ENCODE measurements at regions of chr10 and their contacts with region 1.

Region 1: DNA sequence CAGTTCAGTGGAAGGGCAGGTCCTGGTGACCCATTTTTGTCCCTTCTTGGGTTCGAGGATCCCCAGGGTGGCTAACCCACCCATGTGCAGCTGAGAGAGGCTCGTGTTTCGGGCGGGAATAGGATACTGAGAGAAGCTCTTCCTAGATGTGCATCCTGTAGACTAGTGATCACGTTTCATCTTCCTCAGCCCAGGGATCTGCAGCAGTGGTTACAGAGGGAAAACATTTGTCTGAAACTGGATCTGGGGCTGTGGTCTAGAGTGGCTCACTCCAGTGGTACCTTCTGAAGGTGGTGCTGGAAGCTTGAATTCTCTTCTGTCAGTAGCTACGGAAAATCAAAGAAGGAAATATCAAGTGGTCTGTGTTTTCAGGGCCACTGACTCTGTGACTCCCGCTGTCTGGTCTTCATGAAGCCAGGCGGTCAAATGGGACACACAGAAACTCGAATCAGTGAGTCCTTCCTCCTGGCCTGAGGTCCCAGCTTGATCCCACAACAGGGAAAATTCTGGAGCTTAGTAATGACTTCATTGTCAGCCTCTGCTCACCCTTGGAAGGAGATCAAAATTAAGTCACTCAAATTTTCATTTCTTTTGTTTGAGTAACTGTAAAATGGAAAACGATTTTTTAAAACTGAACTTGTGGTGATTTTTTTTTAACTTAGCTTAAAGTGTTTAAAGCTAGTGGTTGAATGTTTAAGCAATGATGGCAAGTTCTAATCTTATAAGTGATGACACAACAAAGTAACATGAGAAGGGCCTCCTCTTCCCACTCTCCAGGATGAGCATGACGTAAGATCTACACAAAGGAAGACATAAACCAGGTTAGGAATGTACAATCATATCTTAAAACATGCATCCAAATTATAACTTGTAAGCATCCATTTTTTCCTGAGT is 469.3 kb upstream of the KLF6 start:
- DNase-seq: peak; percentile 78
- H3K4me3 ChIP-seq: no peak overlapping the region
- CTCF ChIP-seq: no peak

Region 2: GRCh38 chr10:4101918-4102654 is 152.3 kb before region 1 on chr10:
- CTCF ChIA-PET with region 1: no interaction called
- POLR2A ChIA-PET with region 1: no interaction called
- DNase-seq: no peak
- H3K4me3 ChIP-seq: no peak overlapping the region
- CTCF ChIP-seq: no peak

Region 3: GRCh38 chr10:4267086-4267773 is 12.9 kb after region 1 on chr10:
- CTCF ChIA-PET with region 1: interaction called, 11 read pairs
- POLR2A ChIA-PET with region 1: no interaction called
- DNase-seq: no peak
- H3K4me3 ChIP-seq: no peak overlapping the region
- CTCF ChIP-seq: no peak